Activated CD4-positive, alpha-beta T cell treated with anti-CD3 and anti-CD28 coated beads, Interleukin-2, amount 10 ng/mL, durations not matched to agents 24 days and 14 days (primary cell): ENCODE measurements at regions of chr12 and their contacts with region 1.

Region 1: DNA sequence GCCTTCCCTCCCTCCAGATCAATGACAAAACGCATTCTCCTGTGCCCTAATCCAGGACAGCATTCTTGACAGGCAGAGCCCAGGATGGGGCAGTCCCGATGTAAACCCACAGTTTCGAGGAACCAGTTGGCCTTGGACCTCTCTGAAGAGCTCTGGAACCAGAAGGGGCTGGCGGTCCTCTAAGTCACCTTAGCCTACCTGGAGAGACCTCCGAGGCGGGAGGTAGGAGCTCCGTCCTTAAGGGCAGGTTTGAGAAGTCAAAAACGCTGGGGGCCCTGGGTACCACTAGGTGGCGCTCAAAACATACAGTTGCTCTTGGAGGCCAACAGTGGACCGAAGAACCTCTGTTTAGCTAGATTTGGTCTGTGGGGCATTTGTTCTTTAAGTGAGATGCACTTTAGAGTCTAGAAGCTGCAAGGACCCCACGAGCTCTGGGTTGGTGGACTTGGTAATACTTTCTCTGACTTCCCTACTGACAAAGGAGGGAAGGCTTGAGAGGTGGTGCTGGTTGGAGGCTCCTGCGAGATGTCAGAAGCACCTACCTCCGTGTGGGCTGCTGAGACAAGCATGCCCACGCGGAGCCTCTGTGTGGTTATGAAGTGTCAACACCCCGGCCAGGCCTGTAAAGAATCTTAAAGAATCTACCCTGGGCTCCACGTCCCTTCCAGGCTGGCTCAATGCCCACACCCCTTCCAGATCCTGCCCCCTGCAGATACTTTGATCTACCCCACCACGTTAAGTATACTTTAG is 74.8 kb upstream of the CHST11 start:
- DNase-seq: peak; percentile 94
- H3K4me3 Mint-ChIP-seq: no peak overlapping the region
- H3K27ac Mint-ChIP-seq: peak overlapping the region; percentile 18
- H3K4me1 Mint-ChIP-seq: peaks cover 17% of the 10 kb centered on the region
- H3K27me3 Mint-ChIP-seq: peaks cover 10% of the 10 kb centered on the region

Region 2: DNA sequence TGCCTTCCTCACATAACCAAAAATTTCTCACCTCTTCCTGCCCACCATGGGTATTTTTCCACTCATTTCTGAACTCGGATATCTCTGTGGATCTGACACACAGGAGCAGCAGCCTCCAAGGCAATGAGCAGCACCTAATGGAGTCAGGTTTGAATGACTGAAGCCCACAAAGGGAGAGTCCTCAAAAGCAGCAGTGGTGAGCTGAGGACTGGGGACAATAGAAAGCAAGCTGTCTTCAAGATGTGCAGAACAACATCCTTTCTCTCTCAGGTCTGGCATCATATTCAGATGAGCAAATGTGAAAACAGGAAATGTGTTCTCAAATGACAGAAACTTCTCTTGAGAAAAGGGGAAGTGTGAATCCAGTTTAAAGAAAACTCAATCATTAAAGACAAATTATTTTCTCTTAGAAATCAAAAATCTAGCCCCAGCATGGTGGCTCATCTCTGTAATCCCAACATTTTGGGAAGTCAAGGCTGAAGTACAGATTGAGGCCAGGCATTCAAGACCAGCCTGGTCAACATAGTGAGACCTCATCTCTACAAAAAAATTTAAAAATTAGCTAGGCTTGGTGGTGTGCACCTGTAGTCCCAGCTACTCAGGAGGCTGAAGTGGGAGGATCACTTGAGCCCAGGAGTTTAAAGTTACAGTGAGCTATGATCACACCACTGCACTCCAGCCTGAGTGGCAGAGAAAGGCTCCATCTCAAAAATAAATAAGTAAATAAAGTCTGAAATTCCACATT is 940.3 kb before region 1 on chr12:
- intact Hi-C with region 1: no loop called
- DNase-seq: peak; percentile 87
- H3K4me3 Mint-ChIP-seq: peak overlapping the region; percentile 81
- H3K27ac Mint-ChIP-seq: peak overlapping the region; percentile 89
- H3K4me1 Mint-ChIP-seq: peaks cover 13% of the 10 kb centered on the region
- H3K27me3 Mint-ChIP-seq: no peaks in the 10 kb centered on the region

Region 3: GRCh38 chr12:104329707-104330532 is 52.0 kb before region 1 on chr12:
- intact Hi-C with region 1: no loop called
- DNase-seq: no peak
- H3K4me3 Mint-ChIP-seq: no peak overlapping the region
- H3K27ac Mint-ChIP-seq: no peak overlapping the region
- H3K4me1 Mint-ChIP-seq: no peaks in the 10 kb centered on the region
- H3K27me3 Mint-ChIP-seq: no peaks in the 10 kb centered on the region

Region 4: GRCh38 chr12:104485651-104486362 is 103.9 kb after region 1 on chr12:
- intact Hi-C with region 1: no loop called
- DNase-seq: peak; percentile 85
- H3K4me3 Mint-ChIP-seq: peak overlapping the region; percentile 62
- H3K27ac Mint-ChIP-seq: peak overlapping the region; percentile 83
- H3K4me1 Mint-ChIP-seq: peaks cover 84% of the 10 kb centered on the region
- H3K27me3 Mint-ChIP-seq: no peaks in the 10 kb centered on the region

Region 5: DNA sequence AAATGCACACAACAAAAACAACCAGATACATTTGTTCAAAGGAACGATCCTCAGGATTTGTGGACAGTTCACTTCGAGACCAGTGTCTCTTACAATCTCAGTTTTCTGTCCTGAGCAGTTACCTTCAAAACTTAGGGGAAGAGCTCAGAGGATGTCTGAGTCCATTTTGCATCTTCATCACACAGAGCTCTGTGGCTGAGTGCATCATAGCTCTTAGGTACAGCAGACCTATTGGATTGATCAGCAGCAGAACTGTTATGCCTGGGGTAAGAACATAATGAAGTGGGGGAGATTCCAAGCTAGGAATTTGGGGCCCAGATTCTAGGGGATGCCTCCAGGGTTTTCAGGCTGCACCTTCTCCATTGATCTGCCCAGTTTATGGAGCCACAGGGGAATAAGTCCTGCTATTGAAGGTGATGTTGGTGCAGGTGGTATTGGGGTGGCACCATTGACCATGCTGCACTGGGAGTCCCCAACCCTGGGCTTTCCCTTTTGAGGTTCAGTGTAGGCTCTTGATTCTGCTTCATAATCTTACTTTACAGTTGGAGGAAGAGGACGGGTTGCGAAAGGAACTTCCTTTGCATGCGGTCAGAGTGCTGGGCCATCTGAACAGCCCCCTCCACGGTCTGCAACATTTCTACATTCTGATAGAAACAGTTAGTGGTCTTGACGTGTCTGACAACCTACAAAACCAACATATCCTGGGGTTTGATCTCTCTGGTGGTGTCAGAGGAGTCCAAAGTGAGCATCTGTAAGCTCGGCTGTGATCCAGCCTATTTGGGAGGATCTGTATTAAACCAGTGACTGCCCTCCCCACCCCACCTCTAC is 187.7 kb after region 1 on chr12:
- intact Hi-C with region 1: loop called (anchors 10 kb)
- DNase-seq: peak; percentile 86
- H3K4me3 Mint-ChIP-seq: peak overlapping the region; percentile 66
- H3K27ac Mint-ChIP-seq: peak overlapping the region; percentile 83
- H3K4me1 Mint-ChIP-seq: peaks cover 53% of the 10 kb centered on the region
- H3K27me3 Mint-ChIP-seq: no peaks in the 10 kb centered on the region

Region 6: GRCh38 chr12:104733717-104734175 is 351.8 kb after region 1 on chr12:
- intact Hi-C with region 1: loop called (anchors 10 kb)
- DNase-seq: peak; percentile 80
- H3K4me3 Mint-ChIP-seq: no peak overlapping the region
- H3K27ac Mint-ChIP-seq: no peak overlapping the region
- H3K4me1 Mint-ChIP-seq: peaks cover 56% of the 10 kb centered on the region
- H3K27me3 Mint-ChIP-seq: no peaks in the 10 kb centered on the region

Region 7: GRCh38 chr12:104825408-104825807 is 443.5 kb after region 1 on chr12:
- intact Hi-C with region 1: loop called (anchors 1 kb)
- DNase-seq: no peak
- H3K4me3 Mint-ChIP-seq: no peak overlapping the region
- H3K27ac Mint-ChIP-seq: no peak overlapping the region
- H3K4me1 Mint-ChIP-seq: peaks cover 4% of the 10 kb centered on the region
- H3K27me3 Mint-ChIP-seq: no peaks in the 10 kb centered on the region

Region 8: DNA sequence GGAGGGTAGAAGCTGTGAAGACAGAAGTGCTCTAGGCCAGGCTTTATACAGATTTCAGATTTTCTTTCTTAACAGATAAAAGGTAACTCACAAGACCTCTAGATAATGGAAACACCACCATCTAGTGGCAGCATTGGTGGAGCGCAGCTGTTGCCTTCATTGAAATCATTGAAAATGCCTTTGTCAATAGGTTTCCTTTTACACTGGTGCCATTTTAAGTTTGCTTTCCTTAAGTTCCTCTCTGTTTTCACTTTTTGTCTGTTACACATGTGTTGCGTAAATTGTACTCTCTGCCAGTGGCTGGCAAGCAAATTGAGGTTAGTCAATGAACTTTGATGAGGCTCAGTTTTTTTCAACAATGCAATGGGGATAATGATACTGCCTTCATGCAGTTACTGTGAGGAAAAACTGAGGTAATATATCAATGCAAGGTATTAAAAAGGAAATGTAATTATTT is 671.2 kb after region 1 on chr12:
- intact Hi-C with region 1: loop called (anchors 1 kb)
- DNase-seq: peak; percentile 94
- H3K4me3 Mint-ChIP-seq: no peak overlapping the region
- H3K27ac Mint-ChIP-seq: no peak overlapping the region
- H3K4me1 Mint-ChIP-seq: peaks cover 4% of the 10 kb centered on the region
- H3K27me3 Mint-ChIP-seq: peaks cover 3% of the 10 kb centered on the region

Region 9: DNA sequence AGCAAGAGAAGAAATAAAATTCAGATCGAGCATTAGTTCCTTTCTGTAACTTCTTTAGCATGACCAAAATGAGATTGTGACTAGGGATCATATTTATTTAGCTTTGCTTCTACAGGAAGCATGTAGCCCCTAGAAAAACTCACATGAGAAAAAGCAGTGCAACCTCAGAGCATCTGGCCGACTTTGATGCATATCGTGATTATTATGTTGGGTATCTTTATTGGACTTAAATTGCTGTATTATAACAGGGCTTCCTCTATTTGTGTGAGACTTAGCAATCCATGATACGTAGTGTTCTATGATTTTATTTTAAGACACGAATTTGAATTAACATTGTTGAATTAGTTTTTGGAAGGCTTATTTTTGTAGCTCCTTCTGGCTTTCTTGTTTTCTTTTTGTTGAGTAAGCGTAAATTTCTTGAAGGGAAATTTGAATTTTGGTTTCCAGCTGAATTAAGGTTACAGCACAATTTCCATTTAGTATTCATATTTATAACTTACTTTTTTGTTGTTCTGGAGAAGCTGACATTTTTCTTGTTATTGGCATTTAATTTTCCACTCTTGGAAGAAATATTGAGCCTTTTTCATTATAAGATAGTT is 759.5 kb after region 1 on chr12:
- intact Hi-C with region 1: no loop called
- DNase-seq: no peak
- H3K4me3 Mint-ChIP-seq: no peak overlapping the region
- H3K27ac Mint-ChIP-seq: no peak overlapping the region
- H3K4me1 Mint-ChIP-seq: no peaks in the 10 kb centered on the region
- H3K27me3 Mint-ChIP-seq: no peaks in the 10 kb centered on the region